Activated CD4-positive, alpha-beta memory T cell treated with anti-CD3 and anti-CD28 coated beads for 36 hours (primary cell): ENCODE measurements at regions of chr5 and their contacts with region 1.

Region 1: DNA sequence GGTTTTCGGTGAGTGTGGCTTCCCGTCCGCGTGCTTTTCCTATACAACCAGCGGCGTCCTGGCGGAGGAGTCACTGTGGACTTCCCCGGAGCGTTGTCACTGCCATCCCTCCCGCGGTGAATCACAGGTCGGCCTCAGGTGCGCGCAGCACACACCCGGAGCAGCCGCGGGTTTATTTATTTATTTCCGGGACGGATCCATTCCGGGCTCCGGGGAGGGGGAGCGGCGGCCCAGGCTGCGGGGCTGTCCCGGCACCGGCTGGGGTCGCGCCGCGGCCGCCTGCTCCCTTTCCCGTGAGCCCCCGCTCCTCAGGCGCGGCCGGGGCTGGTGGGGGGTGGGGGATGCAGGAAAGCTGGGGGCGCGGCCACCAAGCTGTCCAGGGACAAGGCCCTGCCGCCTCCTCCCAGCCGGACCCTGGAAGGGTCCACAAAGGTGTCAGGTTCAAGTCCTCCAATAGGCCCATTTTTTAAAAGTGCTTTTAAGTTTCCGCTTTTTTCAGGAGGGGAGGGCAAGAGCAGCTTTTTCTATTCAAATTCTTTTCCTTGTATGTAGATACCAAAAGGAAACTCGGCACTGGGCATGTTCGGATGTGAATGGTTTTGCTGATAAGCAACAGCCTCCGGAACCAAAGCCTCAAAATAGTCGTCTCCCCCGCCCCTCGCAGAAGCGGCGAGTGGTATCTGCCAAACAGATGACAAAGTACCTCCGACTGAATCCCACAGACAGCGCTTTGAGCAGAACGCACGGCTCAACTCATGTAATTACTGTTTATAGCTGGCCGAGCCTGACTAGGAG is 192.5 kb downstream of the CD180 start:
- DNase-seq: peak; percentile 95
- H3K4me3 Mint-ChIP-seq: peak overlapping the region; percentile 92
- H3K27ac Mint-ChIP-seq: peak overlapping the region; percentile 95
- H3K4me1 Mint-ChIP-seq: peaks cover 58% of the 10 kb centered on the region
- H3K27me3 Mint-ChIP-seq: no peaks in the 10 kb centered on the region

Region 2: DNA sequence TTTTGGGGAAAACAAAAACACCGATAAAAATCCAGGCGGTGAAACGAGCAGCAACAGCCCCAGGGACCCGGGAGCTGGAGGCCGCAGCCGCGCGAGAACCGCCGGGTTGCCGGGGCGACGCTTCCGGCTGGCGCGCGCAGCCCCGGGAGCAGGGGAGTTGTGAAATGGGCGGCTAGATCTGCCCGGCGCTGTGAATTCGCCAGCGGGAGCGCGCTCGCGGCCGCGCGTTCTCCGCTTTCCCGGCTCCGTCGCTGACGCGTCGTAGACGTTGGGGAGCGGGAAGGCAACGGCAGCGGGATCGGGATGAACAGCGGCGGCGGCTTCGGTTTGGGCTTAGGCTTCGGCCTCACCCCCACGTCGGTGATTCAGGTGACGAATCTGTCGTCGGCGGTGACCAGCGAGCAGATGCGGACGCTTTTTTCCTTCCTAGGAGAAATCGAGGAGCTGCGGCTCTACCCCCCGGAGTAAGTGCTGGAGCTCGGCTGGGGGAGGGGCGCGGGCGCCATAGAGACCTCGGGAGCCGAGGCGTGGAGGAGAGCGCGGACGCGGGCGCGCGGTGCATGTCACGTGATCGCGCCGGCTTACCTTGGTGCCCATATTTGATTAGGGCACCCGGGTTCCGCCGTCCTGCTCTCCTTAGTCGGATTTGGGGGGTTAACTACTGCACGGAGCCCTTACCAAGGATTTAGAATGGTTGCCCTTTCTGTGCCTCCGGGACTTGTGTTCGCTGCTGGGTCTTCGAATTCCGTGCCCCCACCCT is 859.9 kb before region 1 on chr5 and contains the start of gene SREK1:
- CTCF ChIA-PET with region 1: no interaction called
- POLR2A ChIA-PET with region 1: no interaction called
- intact Hi-C with region 1: loop called (anchors 10 kb)
- DNase-seq: peak; percentile 92
- H3K4me3 Mint-ChIP-seq: peak within 1 kb of the TSS; percentile 93
- H3K27ac Mint-ChIP-seq: peak within 1 kb of the TSS; percentile 98
- H3K4me1 Mint-ChIP-seq: peaks cover 51% of the 10 kb centered on the region
- H3K27me3 Mint-ChIP-seq: no peaks in the 10 kb centered on the region
- total RNA-seq, gene SREK1: 50.9 to 54.1 TPM

Region 3: DNA sequence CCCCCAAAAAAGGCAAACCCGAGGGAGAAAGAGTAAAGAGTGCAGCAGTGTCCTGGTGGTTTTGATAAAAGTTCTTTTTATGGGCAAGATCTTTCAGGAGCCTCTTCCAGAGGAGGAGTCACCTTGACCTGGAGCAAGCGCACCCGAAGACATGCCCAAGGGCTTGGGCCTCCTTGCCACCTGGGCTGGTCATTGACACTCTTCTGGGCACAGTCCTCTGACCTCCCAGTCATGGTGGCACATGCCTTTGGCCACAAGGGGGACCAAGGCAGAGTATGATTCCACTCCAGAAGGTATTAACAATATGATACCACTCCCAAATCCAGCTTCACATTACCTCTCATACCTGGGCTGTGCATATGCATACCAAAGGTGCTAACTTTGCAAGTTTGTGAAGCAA is 323.4 kb before region 1 on chr5:
- CTCF ChIA-PET with region 1: no interaction called
- POLR2A ChIA-PET with region 1: no interaction called
- intact Hi-C with region 1: no loop called
- DNase-seq: no peak
- H3K4me3 Mint-ChIP-seq: no peak overlapping the region
- H3K27ac Mint-ChIP-seq: no peak overlapping the region
- H3K4me1 Mint-ChIP-seq: no peaks in the 10 kb centered on the region
- H3K27me3 Mint-ChIP-seq: peaks cover 9% of the 10 kb centered on the region

Region 4: GRCh38 chr5:66840511-66841013 is 163.6 kb before region 1 on chr5:
- CTCF ChIA-PET with region 1: no interaction called
- POLR2A ChIA-PET with region 1: no interaction called
- intact Hi-C with region 1: loop called (anchors 1 kb)
- DNase-seq: peak; percentile 60
- H3K4me3 Mint-ChIP-seq: no peak overlapping the region
- H3K27ac Mint-ChIP-seq: peak overlapping the region; percentile 88
- H3K4me1 Mint-ChIP-seq: peaks cover 52% of the 10 kb centered on the region
- H3K27me3 Mint-ChIP-seq: peaks cover 25% of the 10 kb centered on the region

Region 5: GRCh38 chr5:67021521-67021920 is 17.4 kb after region 1 on chr5:
- CTCF ChIA-PET with region 1: interaction called, 4 read pairs
- POLR2A ChIA-PET with region 1: interaction called, 3 read pairs
- intact Hi-C with region 1: loop called (anchors 2 kb)
- DNase-seq: no peak
- H3K4me3 Mint-ChIP-seq: no peak overlapping the region
- H3K27ac Mint-ChIP-seq: no peak overlapping the region
- H3K4me1 Mint-ChIP-seq: peaks cover 30% of the 10 kb centered on the region
- H3K27me3 Mint-ChIP-seq: no peaks in the 10 kb centered on the region

Region 6: GRCh38 chr5:67100301-67100700 is 96.2 kb after region 1 on chr5:
- CTCF ChIA-PET with region 1: interaction called, 4 read pairs
- POLR2A ChIA-PET with region 1: no interaction called
- intact Hi-C with region 1: loop called (anchors 1 kb)
- DNase-seq: peak; percentile 72
- H3K4me3 Mint-ChIP-seq: peak overlapping the region; percentile 0
- H3K27ac Mint-ChIP-seq: peak overlapping the region; percentile 71
- H3K4me1 Mint-ChIP-seq: peaks cover 18% of the 10 kb centered on the region
- H3K27me3 Mint-ChIP-seq: no peaks in the 10 kb centered on the region

Region 7: DNA sequence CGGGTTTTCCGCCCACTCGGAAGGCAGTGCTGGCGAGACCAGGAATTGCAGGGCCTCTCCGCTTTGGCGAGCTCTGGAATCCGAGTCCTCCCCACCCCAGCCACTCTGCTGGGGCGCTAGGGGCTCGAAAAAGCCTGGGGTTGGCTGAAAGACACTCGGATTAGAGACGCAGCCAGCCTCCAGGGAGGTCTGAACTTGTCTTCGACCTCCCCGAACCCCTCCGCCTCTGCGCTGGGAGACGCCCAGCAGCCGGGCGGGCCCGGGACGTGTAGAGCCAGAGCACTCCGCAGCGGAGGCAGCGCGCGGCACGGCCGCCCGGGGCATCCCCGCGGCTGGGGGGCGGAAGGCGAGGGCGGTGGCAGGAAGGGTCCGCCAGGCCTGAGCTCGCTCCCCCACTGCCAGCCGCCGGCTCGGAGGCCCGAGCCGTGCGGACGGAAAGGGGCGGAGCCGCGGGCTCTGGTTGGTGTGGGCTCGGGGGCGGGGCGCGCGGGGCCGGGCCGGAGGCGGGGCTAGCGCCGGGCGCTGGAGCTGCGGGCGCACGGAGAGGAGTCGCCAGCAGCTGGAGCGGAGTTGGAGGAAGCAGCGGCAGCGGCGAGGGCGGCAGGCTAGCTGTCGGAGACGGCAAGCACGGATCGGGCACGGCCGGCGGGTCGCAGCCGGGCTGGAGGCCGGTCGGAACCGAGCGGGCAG is 1211.2 kb after region 1 on chr5 and contains the start of gene PIK3R1:
- CTCF ChIA-PET with region 1: no interaction called
- POLR2A ChIA-PET with region 1: no interaction called
- intact Hi-C with region 1: loop called (anchors 5 kb)
- DNase-seq: peak; percentile 95
- H3K4me3 Mint-ChIP-seq: peak within 1 kb of the TSS; percentile 91
- H3K27ac Mint-ChIP-seq: peak within 1 kb of the TSS; percentile 97
- H3K4me1 Mint-ChIP-seq: peaks cover 39% of the 10 kb centered on the region
- H3K27me3 Mint-ChIP-seq: no peaks in the 10 kb centered on the region
- total RNA-seq, gene PIK3R1: 35.3 to 40.9 TPM